ENCODE measurements at regions of chr17 and their contacts with region 1.

Region 1: GRCh38 chr17:1516388-1517161 is at the start of gene INPP5K:
- DNase-seq: peak; percentile 96 to 99 (median 98)
- H3K4me3 ChIP-seq: peak within 1 kb of the TSS; percentile 67 to 100 (median 96)
- H3K27ac ChIP-seq: peak within 1 kb of the TSS in 58 of 59 donors; percentile 51 to 98 (median 90)
- H3K27me3 ChIP-seq: no peaks in the 10 kb centered on the region
- CTCF ChIP-seq: peak in 40 of 56 donors; percentile 4 to 64 (median 29)
- total RNA-seq, gene INPP5K: 28.5 to 70.6 (median 43.8) TPM

Region 2: DNA sequence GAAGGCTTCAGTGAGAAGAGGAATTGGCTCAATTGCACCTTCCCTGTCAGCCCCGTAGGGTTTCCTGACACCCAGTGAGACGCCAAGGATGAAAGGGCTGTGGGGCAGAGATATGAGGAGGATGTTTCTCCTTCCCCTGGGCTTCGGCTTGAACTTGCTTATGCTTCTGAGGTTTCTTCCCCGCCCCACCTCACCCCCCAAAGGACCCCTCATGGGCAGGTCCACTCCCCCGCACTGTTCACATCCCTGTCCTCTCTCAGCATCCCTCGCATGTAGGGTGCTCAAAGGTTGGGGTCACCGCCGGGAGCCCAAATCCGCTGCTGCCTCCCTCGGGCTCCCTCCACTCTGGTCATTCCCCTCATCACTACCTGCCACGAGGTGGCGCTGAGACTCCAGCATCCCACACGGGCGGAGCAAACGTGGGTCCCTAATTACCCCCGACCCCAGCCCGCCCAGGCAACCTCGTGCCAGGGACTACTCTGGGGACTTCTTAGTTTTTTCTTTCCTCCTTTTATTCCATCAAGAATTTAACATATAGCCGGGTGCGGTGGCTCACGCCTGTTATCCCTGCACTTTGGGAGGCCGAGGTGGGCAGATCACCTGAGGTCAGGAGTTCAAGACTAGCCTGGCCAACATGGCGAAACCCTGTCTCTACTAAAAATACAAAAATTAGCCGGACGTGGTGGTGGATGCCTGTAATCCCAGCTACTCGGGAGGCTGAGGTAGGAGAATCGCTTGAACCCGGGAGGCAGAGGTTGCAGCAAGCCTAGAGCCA is 240.4 kb before region 1 on chr17:
- intact Hi-C with region 1: loop called (anchors 5 kb)
- DNase-seq: peak in 7 of 10 donors; percentile 24 to 64 (median 45)
- H3K4me3 ChIP-seq: peak overlapping the region in 2 of 59 donors; percentile 6 to 16
- H3K27ac ChIP-seq: no peak overlapping the region
- H3K27me3 ChIP-seq: peaks cover 0 to 32% (median 6%) of the 10 kb centered on the region in 45 donors
- CTCF ChIP-seq: peak; percentile 39 to 89 (median 74)

Region 3: DNA sequence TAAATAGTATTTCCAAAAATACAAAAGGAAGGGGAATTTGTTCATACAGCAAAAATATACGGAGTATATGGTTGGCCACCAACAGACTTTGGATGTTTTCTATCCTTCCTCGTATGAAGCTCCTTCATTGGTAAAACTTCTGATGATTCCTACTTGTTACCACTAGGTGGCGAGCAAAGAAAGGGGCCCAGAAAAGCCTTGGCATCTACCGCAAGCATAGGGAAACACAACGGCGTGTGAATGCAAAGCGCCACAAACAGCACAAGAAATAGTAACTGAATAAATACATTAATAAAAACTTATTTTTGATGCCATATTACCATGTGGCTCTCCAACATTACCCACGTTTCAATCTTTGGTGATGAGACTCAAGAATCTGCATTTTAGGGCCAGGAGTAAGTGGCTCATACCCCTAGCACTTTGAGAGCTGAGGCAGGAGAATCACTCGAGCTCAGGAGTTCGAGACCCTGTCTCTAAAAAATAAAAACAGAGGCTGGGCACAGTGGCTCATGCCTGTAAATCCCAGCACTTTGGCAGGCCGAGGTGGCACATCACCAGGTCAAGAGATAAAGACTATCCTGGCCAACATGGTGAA is 151.0 kb before region 1 on chr17:
- intact Hi-C with region 1: loop called (anchors 1 to 5 kb)
- DNase-seq: peak in 6 of 10 donors; percentile 43 to 71 (median 51)
- H3K4me3 ChIP-seq: peak overlapping the region in 19 of 59 donors; percentile 0 to 38 (median 15)
- H3K27ac ChIP-seq: peak overlapping the region in 18 of 59 donors; percentile 1 to 57 (median 35)
- H3K27me3 ChIP-seq: no peaks in the 10 kb centered on the region
- CTCF ChIP-seq: peak; percentile 72 to 99 (median 89)

Region 4: DNA sequence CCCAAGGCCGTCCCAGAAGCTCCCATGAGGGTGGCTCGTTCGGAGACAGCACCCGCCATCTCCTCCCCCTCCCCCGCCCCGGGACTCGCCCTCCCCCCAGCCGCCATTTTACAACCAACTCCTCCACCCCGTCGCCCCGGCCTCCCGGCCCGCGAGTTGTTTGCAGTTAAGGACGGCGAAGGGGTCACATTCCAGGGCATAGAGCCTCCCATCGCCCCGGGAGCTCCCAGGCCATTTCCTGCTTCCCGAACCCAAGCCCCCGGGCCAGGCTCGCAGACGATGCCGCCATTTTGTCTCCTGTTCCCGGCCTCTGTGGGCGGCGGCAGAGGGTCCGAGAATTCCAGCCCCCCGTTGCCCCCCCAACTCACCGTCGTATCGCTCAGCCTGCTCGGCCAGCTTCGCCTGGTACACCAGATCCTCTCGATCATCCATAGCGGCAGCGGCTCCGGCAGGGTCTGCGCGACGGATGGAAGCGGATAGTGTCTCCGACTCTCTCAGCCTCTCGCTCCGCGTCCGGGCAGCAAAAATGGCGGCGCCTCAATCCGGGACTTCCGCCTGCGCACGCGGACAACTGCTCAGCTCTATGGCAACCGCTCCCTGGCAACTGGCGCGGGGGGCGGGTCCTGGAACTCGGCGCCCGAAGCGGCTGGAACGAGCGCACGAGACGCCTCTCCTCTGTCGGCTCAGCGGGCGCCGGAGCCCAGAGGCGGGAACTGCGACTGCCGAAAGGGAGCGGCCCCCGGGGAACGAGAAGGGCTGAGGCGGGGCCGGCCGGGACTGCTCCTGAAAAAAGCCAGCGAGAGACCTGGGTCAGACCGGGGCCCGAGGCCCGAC is 116.7 kb before region 1 on chr17 and contains the start of gene YWHAE:
- intact Hi-C with region 1: loop called (anchors 1 to 2 kb)
- DNase-seq: peak; percentile 93 to 97 (median 95)
- H3K4me3 ChIP-seq: peak within 1 kb of the TSS; percentile 62 to 92 (median 80)
- H3K27ac ChIP-seq: peak within 1 kb of the TSS; percentile 80 to 99 (median 98)
- H3K27me3 ChIP-seq: no peaks in the 10 kb centered on the region
- CTCF ChIP-seq: peak in 16 of 56 donors; percentile 7 to 52 (median 18)
- total RNA-seq, gene YWHAE: 537 to 1,262 (median 829) TPM

Region 5: GRCh38 chr17:1561400-1562175 is 45.0 kb after region 1 on chr17:
- intact Hi-C with region 1: loop called (anchors 5 kb)
- DNase-seq: no peak
- H3K4me3 ChIP-seq: peak overlapping the region; percentile 49 to 94 (median 75)
- H3K27ac ChIP-seq: peak overlapping the region in 51 of 59 donors; percentile 9 to 91 (median 69)
- H3K27me3 ChIP-seq: no peaks in the 10 kb centered on the region
- CTCF ChIP-seq: peak in 9 of 56 donors; percentile 6 to 27 (median 12)

Region 6: DNA sequence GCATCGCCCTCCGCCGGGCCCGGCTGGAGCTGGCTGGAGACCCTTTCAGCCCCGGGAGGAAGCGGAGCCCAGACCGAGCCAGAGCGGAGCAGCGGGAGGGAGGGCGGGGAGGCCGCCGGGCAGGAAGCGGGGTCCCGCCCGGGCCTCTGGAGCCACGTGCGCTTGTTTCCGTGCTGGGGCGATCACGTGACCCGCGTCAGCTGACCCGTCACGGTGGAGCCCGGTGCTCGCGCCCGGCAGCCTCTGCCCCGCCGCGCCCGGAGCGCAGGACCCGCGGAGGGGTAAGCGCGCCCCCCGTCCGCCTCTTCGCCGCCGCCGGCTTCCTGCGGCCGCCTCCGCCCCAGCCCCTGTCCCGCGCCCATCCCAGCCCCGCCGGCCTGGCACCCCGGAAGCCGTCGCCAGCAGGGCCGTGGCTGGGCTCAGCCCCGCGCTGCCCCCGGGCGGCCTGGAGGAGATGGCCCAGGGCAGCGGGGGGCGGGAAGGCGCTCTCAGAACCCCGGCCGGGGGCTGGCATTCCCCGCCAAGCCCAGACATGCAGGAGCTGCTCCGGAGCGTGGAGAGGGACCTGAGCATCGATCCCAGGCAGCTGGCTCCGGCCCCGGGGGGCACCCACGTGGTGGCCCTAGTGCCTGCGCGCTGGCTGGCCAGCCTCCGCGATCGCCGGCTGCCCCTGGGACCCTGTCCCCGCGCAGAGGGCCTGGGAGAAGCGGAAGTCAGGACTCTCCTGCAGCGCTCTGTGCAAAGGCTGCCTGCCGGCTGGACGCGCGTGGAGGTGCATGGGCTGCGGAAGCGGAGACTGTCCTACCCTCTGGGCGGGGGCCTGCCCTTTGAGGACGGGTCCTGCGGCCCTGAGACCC is 208.2 kb after region 1 on chr17 and contains the start of gene WDR81:
- intact Hi-C with region 1: no loop called
- DNase-seq: peak; percentile 88 to 94 (median 91)
- H3K4me3 ChIP-seq: peak within 1 kb of the TSS; percentile 63 to 95 (median 81)
- H3K27ac ChIP-seq: peak within 1 kb of the TSS; percentile 13 to 94 (median 84)
- H3K27me3 ChIP-seq: no peaks in the 10 kb centered on the region
- CTCF ChIP-seq: peak in 34 of 56 donors; percentile 8 to 63 (median 24)
- total RNA-seq, gene WDR81: 12.9 to 29.4 (median 19.8) TPM